ENCODE measurements at regions of chr5 and their contacts with region 1.

Region 1: DNA sequence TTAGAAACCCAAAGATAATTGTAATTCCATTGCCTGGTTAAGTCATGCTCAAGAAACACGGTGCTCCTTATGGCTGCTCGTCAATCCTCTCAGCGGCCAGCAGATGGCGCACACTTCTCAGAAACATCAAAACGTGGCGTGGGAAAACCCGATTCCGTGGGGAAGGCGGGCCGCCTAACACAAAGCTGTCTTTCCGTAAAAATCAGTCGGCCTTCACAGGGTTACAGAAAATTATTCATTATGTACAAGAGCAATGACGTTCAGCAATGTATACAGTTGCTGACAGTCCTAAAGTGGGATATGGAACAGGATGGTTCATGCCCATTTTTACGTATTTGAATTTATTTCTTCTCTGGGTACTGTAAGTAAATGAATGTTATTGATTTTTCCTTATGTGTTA is 83.5 kb downstream of the PDE4D start:
- DNase-seq: peak; percentile 70 to 88 (median 80)
- H3K4me3 ChIP-seq: peak overlapping the region in 49 of 59 donors; percentile 6 to 54 (median 32)
- H3K27ac ChIP-seq: no peak overlapping the region
- H3K27me3 ChIP-seq: no peaks in the 10 kb centered on the region
- CTCF ChIP-seq: peak; percentile 89 to 100 (median 96)

Region 2: GRCh38 chr5:60287174-60287771 is 477.2 kb after region 1 on chr5:
- intact Hi-C with region 1: loop called (anchors 10 kb)
- DNase-seq: peak in 1 of 10 donors; percentile 35
- H3K4me3 ChIP-seq: no peak overlapping the region
- H3K27ac ChIP-seq: no peak overlapping the region
- H3K27me3 ChIP-seq: no peaks in the 10 kb centered on the region
- CTCF ChIP-seq: peak; percentile 19 to 71 (median 53)

Region 3: DNA sequence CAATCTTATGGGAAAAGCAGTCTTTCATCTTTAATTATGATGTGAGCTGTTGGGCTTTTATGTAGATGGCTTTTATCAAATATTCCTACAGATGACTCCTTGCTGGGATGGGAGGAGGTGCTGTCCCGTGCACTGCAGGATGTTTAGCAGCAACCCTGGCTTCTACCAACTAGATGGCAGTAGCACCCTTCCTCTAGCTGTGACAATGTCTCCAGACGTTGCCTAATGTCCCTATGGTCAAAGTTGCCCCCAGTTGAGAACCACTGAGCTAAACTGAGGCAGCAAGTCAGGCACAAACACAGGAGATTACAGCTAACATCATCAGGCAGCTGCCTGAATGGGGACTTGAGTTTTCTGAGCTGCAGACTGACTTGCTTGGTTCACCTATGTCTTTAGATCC is 485.4 kb after region 1 on chr5:
- intact Hi-C with region 1: loop called in 1 of 2 experiments (anchors 10 kb)
- DNase-seq: peak in 3 of 10 donors; percentile 30 to 41 (median 38)
- H3K4me3 ChIP-seq: no peak overlapping the region
- H3K27ac ChIP-seq: no peak overlapping the region
- H3K27me3 ChIP-seq: no peaks in the 10 kb centered on the region
- CTCF ChIP-seq: peak in 54 of 56 donors; percentile 15 to 77 (median 53)

Region 4: GRCh38 chr5:60382716-60383115 is 572.7 kb after region 1 on chr5:
- intact Hi-C with region 1: loop called (anchors 5 to 10 kb)
- DNase-seq: no peak
- H3K4me3 ChIP-seq: no peak overlapping the region
- H3K27ac ChIP-seq: no peak overlapping the region
- H3K27me3 ChIP-seq: no peaks in the 10 kb centered on the region
- CTCF ChIP-seq: peak in 55 of 56 donors; percentile 21 to 74 (median 52)

Region 5: DNA sequence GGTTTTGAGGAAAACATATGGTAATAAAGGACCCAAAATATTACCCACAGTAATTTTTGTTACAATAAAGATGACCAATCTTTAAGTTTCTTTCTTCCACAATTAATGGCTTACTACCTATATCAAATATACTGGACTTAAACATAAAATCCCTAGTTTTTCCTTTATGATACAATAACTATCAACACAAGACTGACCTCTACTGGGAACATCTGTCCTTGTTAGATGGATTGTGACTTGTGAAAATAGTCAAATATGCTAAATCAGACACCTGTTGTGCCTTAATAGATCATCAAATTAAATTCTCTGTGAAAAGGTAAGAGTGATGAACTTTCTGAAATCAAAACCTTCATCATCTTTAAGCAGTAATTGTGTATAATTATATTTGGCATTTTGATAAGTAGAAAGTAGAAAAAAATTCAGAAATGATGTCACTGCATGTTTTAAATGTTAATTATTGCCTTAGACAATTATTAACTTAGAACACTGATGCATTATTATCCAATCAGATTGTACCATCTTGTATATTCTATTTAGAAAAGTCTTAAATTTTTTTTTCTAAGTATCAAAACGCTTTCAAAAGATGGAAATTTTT is 776.4 kb after region 1 on chr5:
- intact Hi-C with region 1: loop called (anchors 5 to 10 kb)
- DNase-seq: no peak
- H3K4me3 ChIP-seq: no peak overlapping the region
- H3K27ac ChIP-seq: no peak overlapping the region
- H3K27me3 ChIP-seq: no peaks in the 10 kb centered on the region
- CTCF ChIP-seq: peak in 55 of 56 donors; percentile 27 to 84 (median 64)

Region 6: GRCh38 chr5:60668686-60669304 is 858.8 kb after region 1 on chr5:
- intact Hi-C with region 1: loop called (anchors 2 to 10 kb)
- DNase-seq: no peak
- H3K4me3 ChIP-seq: no peak overlapping the region
- H3K27ac ChIP-seq: no peak overlapping the region
- H3K27me3 ChIP-seq: no peaks in the 10 kb centered on the region
- CTCF ChIP-seq: peak; percentile 58 to 92 (median 75)

Measured in dorsolateral prefrontal cortex (tissue), 120 donors.